ENCODE measurements at regions of chr12 and their contacts with region 1.

Region 1: GRCh38 chr12:54229624-54230212 is 40.9 kb upstream of the SMUG1 start:
- DNase-seq: peak; percentile 91
- H3K4me3 ChIP-seq: no peak overlapping the region
- CTCF ChIP-seq: no peak

Region 2: GRCh38 chr12:54259194-54260011 is 29.7 kb after region 1 on chr12:
- CTCF ChIA-PET with region 1: interaction called, 209 read pairs
- POLR2A ChIA-PET with region 1: interaction called, 7 read pairs
- DNase-seq: no peak
- H3K4me3 ChIP-seq: peak overlapping the region; percentile 2
- CTCF ChIP-seq: no peak

Region 3: GRCh38 chr12:54300732-54301427 is 71.2 kb after region 1 on chr12 and contains the start of gene NFE2:
- CTCF ChIA-PET with region 1: no interaction called
- POLR2A ChIA-PET with region 1: no interaction called
- DNase-seq: no peak
- H3K4me3 ChIP-seq: peak within 1 kb of the TSS; percentile 49
- CTCF ChIP-seq: peak; percentile 23

Measured in AG04449 (cell line).